CD4-positive, alpha-beta T cell (primary cell): ENCODE measurements at regions of chr17 and their contacts with region 1.

Region 1: GRCh38 chr17:75271233-75271954 is 363 bp upstream of the MIF4GD start:
- DNase-seq: peak; percentile 70 to 96 (median 86)
- ATAC-seq: peak; percentile 90
- H3K4me3 ChIP-seq: peak overlapping the region; percentile 95
- H3K4me3 Mint-ChIP-seq: peak overlapping the region; percentile 84
- H3K27ac ChIP-seq: peak overlapping the region; percentile 78 to 85
- H3K27ac Mint-ChIP-seq: peak overlapping the region; percentile 48
- H3K4me1 ChIP-seq: peaks cover 40% of the 10 kb centered on the region
- H3K4me1 Mint-ChIP-seq: peaks cover 21% of the 10 kb centered on the region
- H3K27me3 ChIP-seq: no peaks in the 10 kb centered on the region
- H3K27me3 Mint-ChIP-seq: no peaks in the 10 kb centered on the region
- CTCF ChIP-seq: peak; percentile 54

Region 2: GRCh38 chr17:74873038-74873873 is 398.1 kb before region 1 on chr17:
- CTCF ChIA-PET with region 1: no interaction called
- POLR2A ChIA-PET with region 1: interaction called, 17 read pairs
- intact Hi-C with region 1: no loop called
- DNase-seq: peak; percentile 98 to 100 (median 99)
- ATAC-seq: peak; percentile 94
- H3K4me3 ChIP-seq: peak overlapping the region; percentile 67
- H3K4me3 Mint-ChIP-seq: peak overlapping the region; percentile 90
- H3K27ac ChIP-seq: peak overlapping the region; percentile 89 to 92
- H3K27ac Mint-ChIP-seq: peak overlapping the region; percentile 92
- H3K4me1 ChIP-seq: peaks cover 25% of the 10 kb centered on the region
- H3K4me1 Mint-ChIP-seq: peaks cover 24% of the 10 kb centered on the region
- H3K27me3 ChIP-seq: no peaks in the 10 kb centered on the region
- H3K27me3 Mint-ChIP-seq: no peaks in the 10 kb centered on the region
- CTCF ChIP-seq: no peak

Region 3: DNA sequence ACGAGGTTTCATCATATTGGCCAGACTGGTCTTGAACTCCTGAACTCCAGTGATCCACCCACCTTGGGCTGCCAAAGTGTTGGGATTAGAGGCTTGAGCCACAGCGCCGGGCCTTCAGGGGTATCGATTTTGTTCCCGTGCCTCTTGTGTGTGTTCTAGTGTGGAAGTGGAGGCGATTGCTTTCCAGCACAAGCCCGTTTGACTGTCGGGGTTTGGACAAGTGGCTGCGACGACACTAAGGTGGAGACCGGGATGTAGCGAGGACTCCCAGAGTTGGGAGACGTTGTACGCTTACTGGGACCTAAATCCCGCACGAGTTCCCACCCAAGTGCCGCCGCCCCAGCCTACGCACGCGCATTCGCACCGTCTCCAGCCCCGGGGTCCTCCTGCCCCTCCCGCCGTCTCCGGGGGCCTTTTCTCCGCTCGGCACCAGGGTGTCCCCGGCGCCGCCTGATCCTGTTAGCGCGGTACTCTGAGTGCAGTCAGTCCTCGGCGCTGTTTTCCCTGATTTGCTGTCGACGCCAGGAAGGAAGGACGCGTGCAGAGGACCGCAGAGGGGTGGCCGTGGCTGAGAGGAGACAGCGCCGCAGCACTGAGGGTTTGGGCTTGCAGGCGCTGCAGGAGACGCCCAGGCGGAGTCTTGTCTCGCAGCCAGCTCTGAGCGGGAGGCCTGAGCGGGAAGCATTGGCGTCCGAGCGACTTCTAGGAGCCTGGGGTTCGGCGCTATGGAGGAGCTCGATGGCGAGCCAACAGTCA is 66.2 kb before region 1 on chr17 and contains the start of gene NUP85:
- CTCF ChIA-PET with region 1: interaction called, 8 read pairs
- POLR2A ChIA-PET with region 1: interaction called, 10 read pairs
- intact Hi-C with region 1: no loop called
- DNase-seq: peak; percentile 87 to 95 (median 90)
- ATAC-seq: peak; percentile 89
- H3K4me3 ChIP-seq: peak within 1 kb of the TSS; percentile 95
- H3K4me3 Mint-ChIP-seq: peak within 1 kb of the TSS; percentile 96
- H3K27ac ChIP-seq: peak within 1 kb of the TSS; percentile 91 to 94
- H3K27ac Mint-ChIP-seq: peak within 1 kb of the TSS; percentile 95
- H3K4me1 ChIP-seq: peaks cover 28% of the 10 kb centered on the region
- H3K4me1 Mint-ChIP-seq: peaks cover 27% of the 10 kb centered on the region
- H3K27me3 ChIP-seq: no peaks in the 10 kb centered on the region
- H3K27me3 Mint-ChIP-seq: no peaks in the 10 kb centered on the region
- CTCF ChIP-seq: no peak
- total RNA-seq, gene NUP85: 84.7 to 89.2 TPM

Region 4: GRCh38 chr17:75250009-75250471 is 21.4 kb before region 1 on chr17:
- CTCF ChIA-PET with region 1: interaction called, 25 read pairs
- POLR2A ChIA-PET with region 1: interaction called, 7 read pairs
- intact Hi-C with region 1: no loop called
- DNase-seq: peak; percentile 23 to 78 (median 64)
- ATAC-seq: peak; percentile 97
- H3K4me3 ChIP-seq: peak overlapping the region; percentile 35
- H3K4me3 Mint-ChIP-seq: peak overlapping the region; percentile 75
- H3K27ac ChIP-seq: peak overlapping the region; percentile 45 to 53
- H3K27ac Mint-ChIP-seq: peak overlapping the region; percentile 85
- H3K4me1 ChIP-seq: peaks cover 29% of the 10 kb centered on the region
- H3K4me1 Mint-ChIP-seq: peaks cover 53% of the 10 kb centered on the region
- H3K27me3 ChIP-seq: no peaks in the 10 kb centered on the region
- H3K27me3 Mint-ChIP-seq: no peaks in the 10 kb centered on the region
- CTCF ChIP-seq: no peak

Region 5: DNA sequence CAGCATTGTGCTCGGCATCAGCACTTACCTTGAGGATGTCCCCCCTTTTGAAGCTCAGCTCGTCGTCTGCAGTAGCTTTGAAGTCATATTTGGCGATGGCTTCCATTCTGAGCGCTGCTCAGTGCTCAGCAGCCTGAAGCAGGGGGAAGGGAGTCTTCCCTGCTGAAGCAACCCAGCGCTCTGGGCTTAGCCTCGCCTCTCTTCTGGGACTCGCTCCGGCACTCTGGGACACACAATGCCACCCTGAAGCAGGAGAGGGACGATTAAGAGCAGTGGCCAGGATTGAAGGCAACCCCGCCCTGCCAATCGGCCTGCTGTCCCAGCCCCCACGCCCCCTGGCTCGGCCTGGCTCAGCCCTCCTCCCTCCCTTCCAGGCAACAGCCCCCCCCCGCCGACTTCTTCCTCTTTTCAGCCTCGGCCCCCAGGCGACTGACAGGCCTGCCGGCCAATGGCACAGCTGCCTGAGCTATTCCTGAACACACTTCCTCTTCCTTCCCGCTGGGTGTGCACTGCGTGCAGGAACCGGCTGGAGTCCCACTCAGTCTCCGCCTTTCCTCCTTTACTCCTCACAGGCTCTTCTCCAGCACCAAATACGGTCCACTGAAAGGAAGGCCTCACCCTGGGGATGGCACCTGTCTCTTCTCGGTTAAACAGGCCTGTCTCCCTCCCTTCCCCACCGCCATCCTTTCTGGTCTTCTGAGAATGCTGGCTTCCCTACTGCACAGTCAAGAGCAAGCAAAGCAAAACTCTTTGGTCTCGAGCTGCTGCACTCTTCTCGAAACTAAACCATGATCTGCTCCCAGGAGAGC is 122.3 kb after region 1 on chr17:
- CTCF ChIA-PET with region 1: interaction called, 5 read pairs
- POLR2A ChIA-PET with region 1: interaction called, 16 read pairs
- intact Hi-C with region 1: no loop called
- DNase-seq: peak; percentile 37 to 92 (median 77)
- ATAC-seq: peak; percentile 86
- H3K4me3 ChIP-seq: peak overlapping the region; percentile 68
- H3K4me3 Mint-ChIP-seq: peak overlapping the region; percentile 92
- H3K27ac ChIP-seq: peak overlapping the region; percentile 23 to 63
- H3K27ac Mint-ChIP-seq: peak overlapping the region; percentile 91
- H3K4me1 ChIP-seq: peaks cover 52% of the 10 kb centered on the region
- H3K4me1 Mint-ChIP-seq: peaks cover 88% of the 10 kb centered on the region
- H3K27me3 ChIP-seq: no peaks in the 10 kb centered on the region
- H3K27me3 Mint-ChIP-seq: no peaks in the 10 kb centered on the region
- CTCF ChIP-seq: no peak

Region 6: DNA sequence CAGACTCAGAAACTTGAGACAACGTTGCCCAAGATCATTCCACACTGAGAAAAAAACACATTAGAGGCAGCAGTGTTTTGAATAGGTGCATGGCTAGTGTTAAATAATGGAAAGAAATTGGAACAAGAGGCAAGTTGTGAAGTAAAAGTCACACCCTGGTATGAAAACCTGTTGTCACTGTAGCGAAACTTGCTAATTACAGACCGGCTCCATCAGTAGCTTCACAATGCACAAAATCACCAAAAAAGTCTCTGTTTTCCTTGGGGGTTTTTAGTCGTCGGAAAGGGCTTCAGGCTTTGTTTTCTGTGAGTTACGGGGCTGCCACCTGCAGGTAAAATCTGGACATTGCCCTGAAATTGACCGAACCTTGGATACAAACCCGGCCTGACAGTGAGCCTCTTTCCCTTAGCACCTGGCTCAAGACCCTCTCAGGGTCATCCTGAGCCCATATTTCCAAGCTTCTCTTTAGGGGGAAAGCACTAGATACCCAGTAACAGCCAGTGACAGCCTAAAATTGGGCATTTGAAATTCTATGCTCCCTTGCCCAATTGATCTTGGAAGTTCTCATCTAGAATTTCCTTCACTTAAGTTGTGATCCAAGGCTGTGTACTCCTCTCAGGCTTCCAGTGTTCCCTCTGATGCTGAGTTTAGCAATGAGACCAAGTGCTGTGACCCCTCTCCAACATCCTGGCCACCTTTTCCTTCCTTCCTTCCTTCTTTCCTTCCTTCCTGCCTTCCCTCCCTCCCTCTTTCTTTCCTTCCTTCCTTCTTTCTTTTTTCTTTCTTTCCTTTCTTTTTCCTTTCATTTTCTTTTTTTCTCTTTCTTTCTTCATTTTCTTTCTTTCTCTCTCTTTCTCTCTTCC is 141.3 kb after region 1 on chr17:
- CTCF ChIA-PET with region 1: interaction called, 5 read pairs
- POLR2A ChIA-PET with region 1: interaction called, 12 read pairs
- intact Hi-C with region 1: no loop called
- DNase-seq: peak; percentile 55 to 89 (median 66)
- ATAC-seq: peak; percentile 94
- H3K4me3 ChIP-seq: peak overlapping the region; percentile 11
- H3K4me3 Mint-ChIP-seq: peak overlapping the region; percentile 11
- H3K27ac ChIP-seq: no peak overlapping the region
- H3K27ac Mint-ChIP-seq: no peak overlapping the region
- H3K4me1 ChIP-seq: peaks cover 14% of the 10 kb centered on the region
- H3K4me1 Mint-ChIP-seq: peaks cover 16% of the 10 kb centered on the region
- H3K27me3 ChIP-seq: no peaks in the 10 kb centered on the region
- H3K27me3 Mint-ChIP-seq: no peaks in the 10 kb centered on the region
- CTCF ChIP-seq: peak; percentile 81

Region 7: DNA sequence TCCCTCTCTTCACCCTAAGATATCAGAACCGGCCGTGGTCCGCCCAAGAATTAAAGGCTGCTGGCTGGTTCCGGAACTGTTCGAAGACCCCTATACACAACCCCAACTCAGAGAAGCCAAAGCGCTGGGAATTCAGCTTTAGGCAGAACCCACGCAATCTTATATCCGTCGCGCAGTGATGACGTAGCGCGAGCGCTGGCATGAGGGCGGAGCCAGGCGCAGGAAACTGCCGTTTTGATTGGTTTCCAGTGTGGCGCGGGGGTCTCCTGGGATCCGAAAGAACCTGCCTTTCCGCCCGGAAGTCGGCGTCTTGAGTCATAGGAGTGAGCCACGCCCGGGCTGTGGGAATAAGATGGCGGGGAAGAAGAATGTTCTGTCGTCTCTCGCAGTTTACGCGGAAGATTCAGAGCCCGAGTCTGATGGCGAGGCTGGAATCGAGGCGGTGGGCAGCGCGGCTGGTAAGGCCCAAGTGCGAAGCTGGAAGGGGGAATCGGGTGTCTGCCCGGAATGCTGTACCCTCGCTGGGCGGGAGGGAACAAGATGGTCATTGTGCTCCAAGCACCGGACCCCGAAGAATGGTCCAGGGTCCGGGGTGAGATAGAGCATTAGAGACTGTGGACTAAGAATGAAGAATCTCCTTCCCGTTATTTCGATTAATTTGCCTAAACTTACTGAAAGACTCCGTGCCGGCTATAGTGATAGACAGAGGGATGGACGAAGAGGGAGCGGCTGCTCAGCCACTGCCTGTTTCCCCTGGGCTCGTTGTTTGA is 395.8 kb after region 1 on chr17 and contains the starts of genes RECQL5 and SAP30BP:
- CTCF ChIA-PET with region 1: no interaction called
- POLR2A ChIA-PET with region 1: interaction called, 3 read pairs
- intact Hi-C with region 1: loop called in 1 of 2 experiments (anchors 5 kb)
- DNase-seq: peak; percentile 97 to 99 (median 98)
- ATAC-seq: peak; percentile 100
- H3K4me3 ChIP-seq: peak within 1 kb of the TSS; percentile 76
- H3K4me3 Mint-ChIP-seq: peak within 1 kb of the TSS; percentile 72
- H3K27ac ChIP-seq: peak within 1 kb of the TSS; percentile 87 to 90
- H3K27ac Mint-ChIP-seq: peak within 1 kb of the TSS; percentile 57
- H3K4me1 ChIP-seq: peaks cover 23% of the 10 kb centered on the region
- H3K4me1 Mint-ChIP-seq: peaks cover 26% of the 10 kb centered on the region
- H3K27me3 ChIP-seq: no peaks in the 10 kb centered on the region
- H3K27me3 Mint-ChIP-seq: no peaks in the 10 kb centered on the region
- CTCF ChIP-seq: no peak
- total RNA-seq, gene RECQL5: 16.4 to 17.7 TPM
- total RNA-seq, gene SAP30BP: 209 to 227 TPM